Endothelial cell of umbilical vein (primary cell): ENCODE measurements at regions of chr19 and their contacts with region 1.

Region 1: DNA sequence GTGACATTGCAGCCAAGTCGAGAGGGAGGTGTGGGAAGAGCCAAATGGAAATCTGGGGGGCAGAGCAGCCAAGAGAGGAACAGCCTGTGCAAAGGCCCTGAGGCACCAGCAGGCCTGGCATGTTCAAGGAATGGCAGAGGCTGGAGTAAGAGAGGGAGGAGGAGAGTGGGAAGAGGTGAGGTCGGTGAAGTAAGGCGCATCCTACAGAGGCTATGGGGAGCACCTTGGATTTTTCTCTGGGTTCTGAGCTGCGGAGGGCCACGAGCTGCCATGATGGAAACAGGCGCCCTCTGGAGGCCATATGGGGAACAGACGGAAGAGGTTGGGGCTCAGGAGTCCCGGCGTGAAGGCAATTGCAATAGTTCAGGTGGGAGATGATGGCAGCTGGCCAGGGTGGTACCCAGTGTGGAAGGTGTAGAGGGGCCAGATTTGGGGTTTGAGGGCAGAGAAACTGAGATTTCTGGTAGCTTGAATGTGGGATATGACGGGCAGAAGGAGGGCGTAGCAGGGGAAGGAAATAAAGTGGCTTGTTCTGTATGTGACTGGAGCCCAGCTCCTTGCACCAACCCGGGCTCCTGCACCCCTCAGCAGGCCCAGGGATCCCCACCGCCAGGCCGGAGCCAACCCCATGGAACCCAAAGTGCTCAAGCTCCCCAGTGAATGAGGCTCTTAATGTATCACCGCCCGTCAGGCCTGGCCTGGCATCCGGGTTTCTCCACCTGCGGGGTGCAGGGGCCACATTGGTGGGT is 20.5 kb upstream of the STRN4 start:
- DNase-seq: peak; percentile 27
- H3K4me3 ChIP-seq: no peak overlapping the region
- H3K27ac ChIP-seq: no peak overlapping the region
- H3K4me1 ChIP-seq: no peaks in the 10 kb centered on the region
- H3K27me3 ChIP-seq: no peaks in the 10 kb centered on the region
- CTCF ChIP-seq: peak; percentile 85
- POLR2A ChIP-seq: no peak

Region 2: DNA sequence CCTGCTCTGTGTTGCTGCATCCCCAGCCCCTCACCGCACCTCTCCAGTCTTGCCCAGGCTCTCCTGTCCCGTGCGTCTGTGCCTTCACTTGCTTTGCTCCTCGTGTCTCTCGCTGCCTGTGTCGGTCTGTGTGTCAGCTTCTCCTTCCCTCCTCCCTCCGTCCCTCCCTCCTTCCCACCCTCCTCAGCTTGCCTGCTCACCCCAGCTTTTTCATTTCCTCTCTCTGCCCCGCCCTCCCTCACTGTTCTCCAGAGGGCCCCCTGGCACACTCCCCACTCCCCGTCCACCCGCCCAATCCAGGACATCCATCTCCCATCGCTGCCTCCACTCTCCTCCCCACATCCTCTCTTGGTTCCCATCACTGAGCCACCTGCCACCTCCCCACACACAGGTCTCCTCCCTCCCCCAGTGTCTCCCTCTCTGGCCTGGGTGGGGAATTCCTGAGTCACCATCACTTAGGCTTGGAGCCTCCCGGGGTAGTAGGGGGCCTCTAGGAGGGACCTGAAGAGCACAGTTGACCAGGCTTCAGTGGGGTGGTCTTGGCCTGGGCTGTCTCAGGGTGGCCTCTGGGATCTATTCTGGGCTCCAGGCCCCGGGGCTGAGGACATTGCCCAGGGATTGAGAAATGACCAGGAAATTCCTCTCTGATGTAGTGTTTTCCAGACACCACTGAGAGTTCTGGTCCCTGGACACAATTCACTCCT is 141.6 kb before region 1 on chr19 and contains the start of gene PTGIR:
- CTCF ChIA-PET with region 1: no interaction called
- POLR2A ChIA-PET with region 1: no interaction called
- dilution Hi-C with region 1: no loop called
- intact Hi-C with region 1: no loop called
- DNase-seq: peak; percentile 42
- H3K4me3 ChIP-seq: no peak within 1 kb of the TSS
- H3K27ac ChIP-seq: no peak within 1 kb of the TSS
- H3K4me1 ChIP-seq: peaks cover 12% of the 10 kb centered on the region
- H3K27me3 ChIP-seq: no peaks in the 10 kb centered on the region
- CTCF ChIP-seq: no peak
- POLR2A ChIP-seq: no peak
- total RNA-seq, gene PTGIR: 0.55 and 1.1 TPM in 2 replicates

Region 3: GRCh38 chr19:46692918-46693722 is 73.6 kb before region 1 on chr19:
- CTCF ChIA-PET with region 1: no interaction called
- POLR2A ChIA-PET with region 1: no interaction called
- dilution Hi-C with region 1: no loop called
- intact Hi-C with region 1: no loop called
- DNase-seq: no peak
- H3K4me3 ChIP-seq: no peak overlapping the region
- H3K27ac ChIP-seq: no peak overlapping the region
- H3K4me1 ChIP-seq: no peaks in the 10 kb centered on the region
- H3K27me3 ChIP-seq: no peaks in the 10 kb centered on the region
- CTCF ChIP-seq: no peak
- POLR2A ChIP-seq: no peak

Region 4: GRCh38 chr19:46828484-46828883 is 61.7 kb after region 1 on chr19:
- CTCF ChIA-PET with region 1: interaction called, 11 read pairs
- POLR2A ChIA-PET with region 1: no interaction called
- dilution Hi-C with region 1: no loop called
- intact Hi-C with region 1: no loop called
- DNase-seq: peak; percentile 30
- H3K4me3 ChIP-seq: no peak overlapping the region
- H3K27ac ChIP-seq: no peak overlapping the region
- H3K4me1 ChIP-seq: peaks cover 3% of the 10 kb centered on the region
- H3K27me3 ChIP-seq: no peaks in the 10 kb centered on the region
- CTCF ChIP-seq: no peak
- POLR2A ChIP-seq: no peak